ENCODE measurements at regions of chr6 and their contacts with region 1.

Region 1: GRCh38 chr6:7974938-7975763 is 64.6 kb upstream of the TXNDC5 start:
- DNase-seq: peak; percentile 93

Region 2: DNA sequence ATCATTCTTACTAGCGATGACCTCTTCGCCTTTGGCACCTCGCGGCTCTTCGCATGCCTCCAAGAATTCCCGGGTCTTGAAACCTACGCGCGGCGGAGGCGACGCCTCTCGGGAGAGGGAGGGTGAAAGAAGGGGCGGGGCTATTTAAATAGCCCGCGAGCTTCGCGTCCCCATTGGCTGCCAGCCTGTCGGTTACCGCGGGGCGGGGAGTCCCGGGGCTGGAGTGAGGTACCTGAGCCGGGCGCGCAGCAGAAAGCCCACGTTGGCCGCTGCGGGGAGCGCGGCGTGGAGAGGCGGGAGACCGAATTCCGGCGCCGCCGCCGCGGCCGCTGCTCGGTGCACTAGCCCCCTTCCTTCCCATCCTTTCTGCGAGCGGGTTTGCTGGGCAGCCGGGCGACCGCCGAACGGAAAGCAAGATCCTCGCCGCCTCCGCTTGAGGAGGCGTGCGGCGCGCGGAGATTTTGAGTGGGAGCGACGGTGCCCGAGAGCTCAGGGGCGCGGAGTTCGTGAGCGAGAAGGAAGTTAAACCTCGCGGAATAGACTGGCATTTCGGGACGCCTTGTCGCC is 249.2 kb before region 1 on chr6 and contains the start of gene BMP6:
- in situ Hi-C with region 1: loop called (anchors 10 kb)
- DNase-seq: peak; percentile 91
- total RNA-seq, gene BMP6: 0.05 TPM in 2 replicates